ENCODE measurements at regions of chr16 and their contacts with region 1.

Region 1: GRCh38 chr16:15643048-15643945 is at the start of gene MARF1:
- DNase-seq: peak; percentile 91 to 98 (median 92)
- ATAC-seq: peak; percentile 82
- H3K4me3 ChIP-seq: peak within 1 kb of the TSS; percentile 83
- H3K27ac ChIP-seq: peak within 1 kb of the TSS; percentile 100
- H3K4me1 ChIP-seq: peaks cover 0 to 23% of the 10 kb centered on the region in 2 experiments; a peak in 4 of 5 replicates
- H3K27me3 ChIP-seq: no peaks in the 10 kb centered on the region
- CTCF ChIP-seq: peak; percentile 44 to 58 (median 58); a peak in 5 of 6 replicates
- EP300 ChIP-seq: peak; percentile 26; the same call in 1 of the 2 replicates
- POLR2A ChIP-seq: peak; percentile 97
- RAD21 ChIP-seq: peak in 1 of 2 experiments; percentile 22; a peak in 2 of 4 replicates
- polyA plus RNA-seq, gene MARF1: 4.7 to 5.3 TPM

Region 2: GRCh38 chr16:15427648-15428239 is 215.6 kb before region 1 on chr16:
- CTCF ChIA-PET with region 1: no interaction called
- POLR2A ChIA-PET with region 1: no interaction called
- in situ Hi-C with region 1: no loop called
- intact Hi-C with region 1: loop called (anchors 10 kb)
- DNase-seq: peak; percentile 31 to 76 (median 47)
- ATAC-seq: peak; percentile 96
- H3K4me3 ChIP-seq: no peak overlapping the region
- H3K27ac ChIP-seq: no peak overlapping the region
- H3K4me1 ChIP-seq: no peaks in the 10 kb centered on the region; a peak in 1 of 5 replicates
- H3K27me3 ChIP-seq: peaks cover 5 to 18% of the 10 kb centered on the region in 2 experiments; a peak in 3 of 5 replicates
- CTCF ChIP-seq: peak; percentile 60 to 77 (median 66)
- EP300 ChIP-seq: no peak
- POLR2A ChIP-seq: no peak
- RAD21 ChIP-seq: peak; percentile 75 to 81

Region 3: DNA sequence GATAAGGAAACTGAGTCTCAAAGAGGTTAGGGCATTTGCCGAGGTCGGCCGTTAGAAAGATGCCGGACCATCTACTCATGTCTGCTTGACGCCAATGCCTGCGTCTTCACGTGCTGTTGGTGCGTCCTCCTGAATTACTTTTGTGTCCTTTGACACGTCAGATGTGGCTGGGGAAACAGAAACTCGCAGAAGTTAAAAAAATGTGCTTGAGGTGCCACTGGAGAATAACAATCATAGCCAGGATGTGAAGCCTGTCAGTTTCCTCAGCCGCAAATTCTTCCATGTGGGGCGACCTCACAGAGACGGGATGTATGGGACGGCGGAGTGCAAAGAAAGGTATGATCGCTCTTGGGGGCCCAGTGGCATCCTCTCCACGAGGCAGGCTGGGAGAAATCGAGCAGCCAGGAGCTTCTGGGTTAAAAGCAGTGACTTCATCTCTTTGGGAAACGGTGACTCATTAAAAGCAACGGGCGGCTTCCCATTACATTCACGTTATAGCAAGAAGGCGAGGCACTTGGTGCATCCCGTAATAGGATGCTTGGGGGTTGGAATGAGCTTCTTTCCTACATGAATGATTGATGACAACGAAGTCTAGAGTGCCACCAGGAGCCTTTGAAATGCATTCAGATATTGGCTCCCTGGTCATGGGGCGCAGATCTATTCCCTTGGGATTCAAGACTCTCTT is 141.1 kb before region 1 on chr16:
- CTCF ChIA-PET with region 1: no interaction called
- POLR2A ChIA-PET with region 1: no interaction called
- in situ Hi-C with region 1: no loop called
- intact Hi-C with region 1: no loop called
- DNase-seq: peak; percentile 43 to 68 (median 50)
- ATAC-seq: peak; percentile 73
- H3K4me3 ChIP-seq: no peak overlapping the region
- H3K27ac ChIP-seq: 0 out of 3 replicates have a peak overlapping the region, but pooled peaks have one; percentile 32
- H3K4me1 ChIP-seq: peaks cover under 1 to 12% of the 10 kb centered on the region in 2 experiments; a peak in 3 of 5 replicates
- H3K27me3 ChIP-seq: no peaks in the 10 kb centered on the region; a peak in 1 of 5 replicates
- CTCF ChIP-seq: no peak
- EP300 ChIP-seq: no peak
- POLR2A ChIP-seq: no peak
- RAD21 ChIP-seq: no peak

Region 4: GRCh38 chr16:15631730-15632409 is 11.4 kb before region 1 on chr16:
- CTCF ChIA-PET with region 1: no interaction called
- POLR2A ChIA-PET with region 1: interaction called, 13 read pairs
- in situ Hi-C with region 1: no loop called
- intact Hi-C with region 1: no loop called
- DNase-seq: no peak
- ATAC-seq: no peak
- H3K4me3 ChIP-seq: no peak overlapping the region
- H3K27ac ChIP-seq: no peak overlapping the region
- H3K4me1 ChIP-seq: no peaks in the 10 kb centered on the region
- H3K27me3 ChIP-seq: no peaks in the 10 kb centered on the region
- CTCF ChIP-seq: no peak
- EP300 ChIP-seq: no peak
- POLR2A ChIP-seq: no peak
- RAD21 ChIP-seq: no peak

Region 5: GRCh38 chr16:15660203-15660601 is 16.9 kb after region 1 on chr16:
- CTCF ChIA-PET with region 1: no interaction called
- POLR2A ChIA-PET with region 1: interaction called, 11 read pairs
- in situ Hi-C with region 1: no loop called
- intact Hi-C with region 1: no loop called
- DNase-seq: peak in 1 of 4 experiments; percentile 47
- ATAC-seq: peak; percentile 59
- H3K4me3 ChIP-seq: no peak overlapping the region
- H3K27ac ChIP-seq: peak overlapping the region; percentile 68
- H3K4me1 ChIP-seq: peaks cover 14 to 25% of the 10 kb centered on the region in 2 experiments; a peak in 4 of 5 replicates
- H3K27me3 ChIP-seq: no peaks in the 10 kb centered on the region
- CTCF ChIP-seq: no peak
- EP300 ChIP-seq: no peak
- POLR2A ChIP-seq: no peak
- RAD21 ChIP-seq: no peak

Region 6: DNA sequence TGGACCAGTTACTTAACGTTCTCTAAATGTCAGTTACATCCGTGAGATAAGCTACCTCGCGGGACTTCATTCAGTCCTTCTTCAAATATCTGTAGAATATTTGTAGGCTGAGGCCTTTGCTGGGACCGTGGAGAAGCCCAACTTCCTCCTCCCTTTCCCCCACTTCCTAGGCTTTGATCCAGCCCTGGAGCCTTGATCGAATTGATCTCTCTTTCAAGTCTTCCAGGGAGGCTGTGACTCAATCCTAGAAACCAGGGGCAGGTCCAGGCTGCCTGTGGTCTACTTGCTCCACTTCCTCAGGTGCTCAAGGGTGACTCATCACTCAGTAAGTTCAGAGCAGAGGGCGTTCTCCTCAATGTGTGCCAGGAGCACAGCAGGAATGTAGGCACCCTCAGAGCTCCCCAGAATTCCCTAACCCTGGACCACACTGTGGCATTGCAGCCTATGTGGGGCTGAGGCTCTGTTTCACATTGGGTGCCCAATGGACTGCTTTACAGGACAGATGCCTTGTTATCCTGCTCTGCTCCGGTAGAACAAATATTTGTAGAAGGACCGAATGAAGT is 256.3 kb after region 1 on chr16:
- CTCF ChIA-PET with region 1: no interaction called
- POLR2A ChIA-PET with region 1: no interaction called
- in situ Hi-C with region 1: no loop called
- intact Hi-C with region 1: no loop called
- DNase-seq: peak; percentile 61 to 75 (median 62)
- ATAC-seq: peak; percentile 89
- H3K4me3 ChIP-seq: no peak overlapping the region
- H3K27ac ChIP-seq: peak overlapping the region; percentile 8; the same call in 1 of the 3 replicates
- H3K4me1 ChIP-seq: peaks cover 16 to 26% of the 10 kb centered on the region in 2 experiments
- H3K27me3 ChIP-seq: no peaks in the 10 kb centered on the region
- CTCF ChIP-seq: no peak
- EP300 ChIP-seq: no peak
- POLR2A ChIP-seq: no peak
- RAD21 ChIP-seq: no peak

Measured in K562 (cell line).